ENCODE measurements at regions of chr1 and their contacts with region 1.

Region 1: DNA sequence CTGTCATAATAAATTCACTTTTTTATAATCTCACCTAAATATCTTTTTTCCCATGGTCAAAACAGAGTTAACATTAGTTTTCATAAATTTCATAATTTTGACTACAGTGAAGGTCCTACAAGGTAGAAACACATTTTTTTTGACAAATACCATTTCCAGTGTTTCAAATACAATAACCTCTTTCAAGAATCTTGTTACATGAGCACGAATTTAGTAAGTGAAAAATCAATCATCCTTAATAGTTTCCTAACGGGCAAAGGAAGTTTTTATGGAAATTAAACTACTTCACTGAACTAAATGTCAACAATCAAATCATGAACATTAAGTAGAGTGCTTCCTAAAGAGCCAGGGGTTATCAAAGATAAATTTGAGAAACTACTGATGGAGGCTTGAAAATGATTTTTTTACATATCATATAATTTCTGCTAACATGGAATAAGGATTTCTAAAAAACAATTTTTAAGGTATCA is 35.4 kb downstream of the ABL2 start:
- DNase-seq: no peak
- H3K4me3 ChIP-seq: no peak overlapping the region
- CTCF ChIP-seq: no peak

Region 2: DNA sequence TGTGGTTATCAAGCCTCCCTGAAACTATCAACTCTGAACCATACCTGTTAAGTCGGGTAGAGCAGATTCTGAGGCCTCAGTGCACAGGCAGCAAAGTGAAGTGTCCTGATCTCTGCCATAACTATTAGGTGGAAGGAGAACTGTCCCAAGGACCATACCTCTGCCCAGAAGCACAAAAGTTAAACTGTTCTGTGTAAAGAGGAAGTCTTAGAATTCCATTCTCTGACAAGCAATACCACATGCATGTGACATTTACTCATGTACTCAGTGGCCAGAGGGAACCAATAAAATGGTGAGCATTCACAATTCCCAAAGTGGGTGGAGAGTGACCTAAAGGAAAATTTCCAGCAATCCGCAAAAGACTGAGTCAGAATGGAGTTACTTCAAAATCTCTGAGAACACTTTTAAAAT is 51.2 kb before region 1 on chr1:
- CTCF ChIA-PET with region 1: no interaction called
- POLR2A ChIA-PET with region 1: no interaction called
- DNase-seq: peak; percentile 92
- H3K4me3 ChIP-seq: peak overlapping the region; percentile 64
- CTCF ChIP-seq: no peak

Region 3: GRCh38 chr1:179175011-179175841 is 18.9 kb before region 1 on chr1:
- CTCF ChIA-PET with region 1: interaction called, 25 read pairs
- POLR2A ChIA-PET with region 1: no interaction called
- DNase-seq: peak; percentile 69
- H3K4me3 ChIP-seq: no peak overlapping the region
- CTCF ChIP-seq: no peak